MCF 10A (cell line): ENCODE measurements at regions of chr20 and their contacts with region 1.

Region 1: DNA sequence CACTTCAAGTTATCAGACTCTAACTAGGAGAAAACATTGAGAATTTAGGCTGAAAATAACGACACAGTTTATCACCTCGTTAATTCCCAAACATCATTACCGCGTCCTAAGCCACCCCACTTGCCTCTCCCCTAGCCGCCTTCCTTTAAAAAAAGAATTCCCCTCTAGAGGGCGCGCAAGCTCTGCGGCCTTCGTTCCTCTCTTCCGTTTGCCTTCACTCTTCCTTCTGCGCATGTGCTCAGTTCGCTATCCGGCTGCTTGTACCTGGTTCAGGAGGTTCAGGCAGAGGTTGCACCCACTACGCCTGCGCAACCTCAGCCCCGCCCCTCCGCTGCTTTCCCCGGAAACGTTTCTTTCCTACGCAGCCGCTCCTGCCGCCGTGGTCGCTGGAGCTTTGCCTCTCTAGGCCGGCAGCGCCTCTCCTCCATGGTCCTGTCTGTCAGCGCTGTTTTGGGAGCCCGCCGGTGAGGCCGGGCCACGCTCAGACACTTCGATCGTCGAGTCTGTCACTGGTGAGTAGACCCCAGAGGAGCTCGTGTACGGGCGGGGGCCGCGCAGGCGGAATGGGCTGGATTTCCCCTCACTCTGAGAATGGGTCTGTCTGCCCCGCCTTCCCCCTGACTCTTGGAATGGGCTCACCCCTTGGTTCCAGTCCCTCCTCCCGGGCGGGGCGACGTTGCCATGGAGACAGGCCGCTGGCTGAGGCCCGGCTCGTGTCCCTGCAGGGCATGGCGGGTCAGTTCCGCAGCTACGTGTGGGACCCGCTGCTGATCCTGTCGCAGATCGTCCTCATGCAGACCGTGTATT is at the start of gene SYS1:
- DNase-seq: peak; percentile 99
- H3K4me3 Mint-ChIP-seq: peak within 1 kb of the TSS; percentile 97
- H3K27ac Mint-ChIP-seq: peak within 1 kb of the TSS; percentile 95
- H3K4me1 Mint-ChIP-seq: peaks cover 30% of the 10 kb centered on the region
- H3K27me3 Mint-ChIP-seq: no peaks in the 10 kb centered on the region
- CTCF ChIP-seq: peak; percentile 67
- total RNA-seq, gene SYS1: 19.1 and 28.2 TPM in 2 replicates

Region 2: DNA sequence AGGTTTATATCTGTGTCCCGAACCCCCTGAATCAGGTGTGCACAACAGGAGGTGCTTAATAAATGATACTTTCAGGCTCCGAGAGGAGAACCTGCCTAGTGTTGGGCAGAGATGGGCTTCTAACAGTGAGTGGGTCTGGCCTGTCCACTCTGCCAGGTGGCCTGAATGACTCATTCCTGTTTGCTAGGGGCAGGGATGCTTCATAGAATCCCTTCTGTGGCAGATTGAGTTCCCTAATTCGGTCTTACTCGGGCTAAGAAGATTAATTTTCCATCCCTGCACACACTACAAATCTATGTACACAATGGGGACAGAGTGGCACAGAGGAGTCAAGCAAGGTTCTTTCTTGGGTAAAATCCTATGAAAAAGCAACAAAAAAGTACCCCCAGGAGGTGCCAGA is 34.6 kb before region 1 on chr20:
- CTCF ChIA-PET with region 1: interaction called, 15 read pairs
- POLR2A ChIA-PET with region 1: interaction called, 1,328 read pairs
- intact Hi-C with region 1: no loop called
- DNase-seq: no peak
- H3K4me3 Mint-ChIP-seq: no peak overlapping the region
- H3K27ac Mint-ChIP-seq: no peak overlapping the region
- H3K4me1 Mint-ChIP-seq: no peaks in the 10 kb centered on the region
- H3K27me3 Mint-ChIP-seq: no peaks in the 10 kb centered on the region
- CTCF ChIP-seq: no peak

Region 3: GRCh38 chr20:45347936-45348778 is 14.8 kb before region 1 on chr20 and contains the start of gene SDC4:
- CTCF ChIA-PET with region 1: interaction called, 82 read pairs
- POLR2A ChIA-PET with region 1: interaction called, 1,328 read pairs
- intact Hi-C with region 1: no loop called
- DNase-seq: peak; percentile 73
- H3K4me3 Mint-ChIP-seq: peak within 1 kb of the TSS; percentile 89
- H3K27ac Mint-ChIP-seq: peak within 1 kb of the TSS; percentile 93
- H3K4me1 Mint-ChIP-seq: peaks cover 20% of the 10 kb centered on the region
- H3K27me3 Mint-ChIP-seq: no peaks in the 10 kb centered on the region
- CTCF ChIP-seq: no peak
- total RNA-seq, gene SDC4: 180 and 209 TPM in 2 replicates

Region 4: DNA sequence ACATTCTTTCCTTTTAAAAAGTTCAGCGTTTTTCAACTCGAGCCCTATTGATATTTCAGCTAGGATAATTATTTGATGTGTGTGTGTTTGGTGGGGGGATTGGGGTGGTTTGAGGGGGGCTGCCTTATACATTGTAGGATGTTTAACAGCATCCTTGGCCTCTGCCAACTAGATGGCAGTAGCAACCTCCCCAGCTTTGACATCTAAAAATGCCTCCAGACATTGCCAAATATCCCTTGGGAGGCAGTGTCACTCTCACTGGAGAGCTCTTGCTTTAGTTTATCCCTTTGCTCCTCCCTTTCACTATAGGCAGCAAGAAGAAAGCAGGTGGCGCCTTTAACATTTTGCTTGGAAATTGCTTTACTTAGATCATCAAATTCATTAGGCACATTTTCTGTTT is 29.7 kb after region 1 on chr20:
- CTCF ChIA-PET with region 1: interaction called, 10 read pairs
- POLR2A ChIA-PET with region 1: interaction called, 7 read pairs
- intact Hi-C with region 1: no loop called
- DNase-seq: no peak
- H3K4me3 Mint-ChIP-seq: no peak overlapping the region
- H3K27ac Mint-ChIP-seq: no peak overlapping the region
- H3K4me1 Mint-ChIP-seq: no peaks in the 10 kb centered on the region
- H3K27me3 Mint-ChIP-seq: no peaks in the 10 kb centered on the region
- CTCF ChIP-seq: no peak

Region 5: GRCh38 chr20:45415774-45416637 is 53.0 kb after region 1 on chr20 and contains the start of gene PIGT:
- CTCF ChIA-PET with region 1: interaction called, 35 read pairs
- POLR2A ChIA-PET with region 1: interaction called, 44 read pairs
- intact Hi-C with region 1: loop called (anchors 5 kb)
- DNase-seq: peak; percentile 81
- H3K4me3 Mint-ChIP-seq: peak within 1 kb of the TSS; percentile 90
- H3K27ac Mint-ChIP-seq: peak within 1 kb of the TSS; percentile 93
- H3K4me1 Mint-ChIP-seq: peaks cover 24% of the 10 kb centered on the region
- H3K27me3 Mint-ChIP-seq: no peaks in the 10 kb centered on the region
- CTCF ChIP-seq: no peak
- total RNA-seq, gene PIGT: 79.4 and 84.3 TPM in 2 replicates